PC-9 (cell line): ENCODE measurements at regions of chr3 and their contacts with region 1.

Region 1: GRCh38 chr3:193214445-193214844 is 26.6 kb upstream of the PLAAT1 start:
- DNase-seq: no peak
- H3K4me3 ChIP-seq: no peak overlapping the region
- H3K27ac ChIP-seq: no peak overlapping the region
- H3K4me1 ChIP-seq: 0 out of 2 replicates have a peak, but pooled peaks cover 5% of the 10 kb centered on the region
- H3K27me3 ChIP-seq: no peaks in the 10 kb centered on the region
- CTCF ChIP-seq: no peak

Region 2: DNA sequence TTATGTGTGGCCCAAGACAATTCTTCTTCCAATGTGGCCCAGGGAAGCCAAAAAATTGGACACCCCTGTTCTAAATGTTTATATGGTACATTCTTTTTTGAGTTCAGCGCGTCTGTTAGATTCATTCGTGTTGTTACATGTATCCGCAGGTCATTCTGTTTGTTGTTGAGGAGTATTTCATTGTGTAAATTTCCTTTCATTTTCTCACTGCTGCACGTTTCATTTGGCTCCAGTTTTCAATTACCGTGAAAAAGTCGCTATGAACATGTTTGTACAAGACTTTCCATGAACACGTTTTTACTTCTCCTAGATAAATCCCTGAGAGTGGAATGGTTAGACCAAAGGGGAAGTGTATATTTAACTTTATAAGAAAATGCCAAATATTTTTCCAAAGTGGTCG is 371.1 kb after region 1 on chr3:
- CTCF ChIA-PET with region 1: interaction called, 20 read pairs
- POLR2A ChIA-PET with region 1: no interaction called
- intact Hi-C with region 1: no loop called
- DNase-seq: peak in 1 of 2 experiments; percentile 4
- H3K4me3 ChIP-seq: no peak overlapping the region
- H3K27ac ChIP-seq: no peak overlapping the region
- H3K4me1 ChIP-seq: peaks cover 12% of the 10 kb centered on the region
- H3K27me3 ChIP-seq: no peaks in the 10 kb centered on the region
- CTCF ChIP-seq: no peak